ENCODE measurements at regions of chr3 and their contacts with region 1.

Region 1: GRCh38 chr3:183468424-183468823 is 40.0 kb upstream of the MCF2L2 start:
- DNase-seq: no peak
- ATAC-seq: peak; percentile 66 to 69 (median 68)
- H3K4me3 ChIP-seq: peak overlapping the region in 1 of 3 donors; percentile 30
- H3K27ac ChIP-seq: peak overlapping the region; percentile 11 to 74 (median 22)
- H3K4me1 ChIP-seq: peaks cover 0 to 19% (median 3%) of the 10 kb centered on the region in 4 donors
- H3K27me3 ChIP-seq: no peaks in the 10 kb centered on the region
- CTCF ChIP-seq: no peak
- POLR2A ChIP-seq: no peak

Region 2: DNA sequence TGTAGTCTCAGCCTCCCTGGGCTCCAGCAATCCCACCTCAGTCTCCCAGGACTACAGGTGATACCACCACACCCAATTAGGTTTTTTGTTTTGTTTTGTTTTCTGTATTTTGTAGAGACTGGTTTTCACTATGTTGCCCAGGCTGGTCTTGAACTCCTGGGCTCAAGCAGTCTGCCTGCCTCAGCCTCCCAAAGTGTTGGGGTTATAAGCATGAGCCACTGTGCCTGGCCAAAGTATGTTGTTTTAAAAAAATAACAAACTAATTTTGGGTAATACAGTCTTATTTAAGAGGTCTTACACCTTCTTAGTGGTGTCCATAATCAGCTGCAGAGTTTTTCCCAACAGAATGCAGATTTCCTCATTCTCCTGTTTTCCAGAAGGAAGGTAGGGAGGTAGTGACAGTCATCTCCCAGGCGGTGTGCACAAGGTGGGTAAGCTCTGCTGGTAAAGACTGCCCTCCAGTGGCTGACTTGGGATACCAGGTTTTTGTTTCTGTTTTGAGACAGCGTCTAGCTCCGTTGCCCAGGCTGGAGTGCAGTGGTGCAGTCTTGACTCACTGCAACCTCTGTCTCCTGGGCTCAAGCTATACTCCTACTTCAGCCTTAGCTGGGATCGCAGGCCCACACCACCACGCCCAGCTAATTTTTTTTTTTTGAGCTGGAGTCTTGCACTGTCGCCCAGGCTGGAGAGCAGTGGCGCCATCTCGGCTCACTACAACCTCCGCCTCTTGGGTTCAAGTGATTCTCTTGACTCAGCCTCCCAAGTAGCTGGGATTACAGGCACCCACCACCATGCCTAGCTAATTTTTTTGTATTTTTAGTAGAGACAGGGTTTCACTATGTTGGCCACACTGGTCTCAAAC is 298.6 kb after region 1 on chr3:
- intact Hi-C with region 1: loop called in 1 of 2 experiments (anchors 5 kb)
- DNase-seq: peak; percentile 66 to 81 (median 69)
- ATAC-seq: peak; percentile 99
- H3K4me3 ChIP-seq: no peak overlapping the region
- H3K27ac ChIP-seq: no peak overlapping the region
- H3K4me1 ChIP-seq: no peaks in the 10 kb centered on the region
- H3K27me3 ChIP-seq: no peaks in the 10 kb centered on the region
- CTCF ChIP-seq: peak; percentile 73 to 87 (median 84)
- POLR2A ChIP-seq: no peak